ENCODE measurements at regions of chr4 and their contacts with region 1.

Region 1: GRCh38 chr4:25144870-25145481 is 15.3 kb downstream of the SEPSECS start:
- DNase-seq: no peak
- ATAC-seq: no peak
- H3K4me3 Mint-ChIP-seq: no peak overlapping the region
- H3K27ac Mint-ChIP-seq: no peak overlapping the region
- H3K4me1 Mint-ChIP-seq: no peaks in the 10 kb centered on the region
- H3K27me3 Mint-ChIP-seq: no peaks in the 10 kb centered on the region

Region 2: DNA sequence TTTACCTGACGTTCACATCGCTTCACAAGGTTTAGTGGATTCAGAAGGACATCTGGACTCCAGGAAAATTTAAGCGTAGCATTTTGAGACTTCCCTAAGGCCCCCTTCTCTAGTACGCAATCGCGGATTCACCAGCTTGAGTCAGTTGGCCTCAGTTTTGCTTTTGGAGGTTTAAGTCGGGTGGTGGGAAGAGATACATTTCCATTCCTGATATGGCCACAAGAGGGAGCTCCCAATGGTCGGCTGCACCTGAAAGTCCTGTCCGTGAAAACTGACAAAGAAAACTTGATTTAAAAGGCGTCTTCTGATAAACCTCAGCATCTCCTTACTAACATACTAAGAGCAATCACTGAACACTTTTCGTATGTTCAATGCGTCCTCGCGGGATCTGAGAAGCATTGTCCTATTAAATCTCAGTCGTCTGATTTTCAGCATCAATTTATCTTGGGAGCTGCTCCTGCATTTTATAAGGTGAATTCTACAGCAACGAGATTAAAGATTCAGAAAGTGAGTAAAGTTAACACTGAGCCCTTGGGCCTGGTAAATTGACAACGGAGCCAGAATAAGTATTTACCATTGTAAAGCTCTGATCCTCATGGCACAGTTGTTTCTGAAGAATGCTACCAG is 164.8 kb before region 1 on chr4:
- CTCF ChIA-PET with region 1: interaction called, 24 read pairs
- POLR2A ChIA-PET with region 1: no interaction called
- DNase-seq: peak; percentile 66
- ATAC-seq: peak; percentile 61
- H3K4me3 Mint-ChIP-seq: peak overlapping the region; percentile 36
- H3K27ac Mint-ChIP-seq: no peak overlapping the region
- H3K4me1 Mint-ChIP-seq: peaks cover 11% of the 10 kb centered on the region
- H3K27me3 Mint-ChIP-seq: peaks cover 3% of the 10 kb centered on the region

Region 3: DNA sequence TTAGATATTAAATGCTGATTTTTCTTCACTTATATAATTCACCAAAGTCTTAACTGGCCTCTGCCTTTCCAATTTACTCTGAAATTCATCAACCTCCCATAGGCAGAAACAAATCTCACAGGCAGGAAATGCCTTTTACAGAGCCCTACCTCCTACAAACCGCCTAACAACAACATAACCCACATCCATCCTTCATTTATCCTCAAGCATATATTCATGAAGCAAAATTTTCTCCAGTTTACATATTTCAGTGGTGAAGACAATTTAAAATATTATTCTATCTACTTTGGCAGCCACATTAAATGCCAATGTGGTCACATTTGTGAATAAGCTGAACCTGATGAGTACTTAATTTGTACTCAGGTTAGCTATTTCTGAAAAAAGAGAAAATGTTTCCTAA is 15.1 kb before region 1 on chr4:
- CTCF ChIA-PET with region 1: interaction called, 21 read pairs
- POLR2A ChIA-PET with region 1: no interaction called
- DNase-seq: no peak
- ATAC-seq: no peak
- H3K4me3 Mint-ChIP-seq: no peak overlapping the region
- H3K27ac Mint-ChIP-seq: no peak overlapping the region
- H3K4me1 Mint-ChIP-seq: no peaks in the 10 kb centered on the region
- H3K27me3 Mint-ChIP-seq: no peaks in the 10 kb centered on the region

Measured in activated CD8-positive, alpha-beta T cell treated with anti-CD3 and anti-CD28 coated beads, Interleukin-2, amount 10 ng/mL, durations not matched to agents 7 days and 5 days (primary cell).